Thyroid gland (tissue), 4 donors: ENCODE measurements at regions of chrX and their contacts with region 1.

Region 1: GRCh38 chrX:107787827-107788226 is 10.3 kb downstream of the NCBP2L start:
- DNase-seq: no peak
- H3K4me3 ChIP-seq: no peak overlapping the region
- H3K27ac ChIP-seq: no peak overlapping the region
- H3K4me1 ChIP-seq: no peaks in the 10 kb centered on the region
- H3K27me3 ChIP-seq: no peaks in the 10 kb centered on the region
- CTCF ChIP-seq: no peak
- POLR2A ChIP-seq: no peak

Region 2: GRCh38 chrX:107978707-107979307 is 191.0 kb after region 1 on chrX:
- intact Hi-C with region 1: loop called (anchors 10 kb)
- DNase-seq: peak; percentile 5 to 6
- H3K4me3 ChIP-seq: no peak overlapping the region
- H3K27ac ChIP-seq: no peak overlapping the region
- H3K4me1 ChIP-seq: peaks cover 0 to 4% of the 10 kb centered on the region in 2 donors
- H3K27me3 ChIP-seq: no peaks in the 10 kb centered on the region
- CTCF ChIP-seq: peak in 4 of 6 experiments; percentile 20 to 50 (median 42)
- POLR2A ChIP-seq: no peak